ENCODE measurements at regions of chr16 and their contacts with region 1.

Region 1: GRCh38 chr16:361872-362701 is 8.3 kb downstream of the MRPL28 start:
- DNase-seq: peak; percentile 89
- CTCF ChIP-seq: peak; percentile 83

Region 2: GRCh38 chr16:117379-118365 is 244.4 kb before region 1 on chr16:
- CTCF ChIA-PET with region 1: interaction called, 15 read pairs
- POLR2A ChIA-PET with region 1: no interaction called
- DNase-seq: peak; percentile 67
- CTCF ChIP-seq: peak; percentile 58

Region 3: DNA sequence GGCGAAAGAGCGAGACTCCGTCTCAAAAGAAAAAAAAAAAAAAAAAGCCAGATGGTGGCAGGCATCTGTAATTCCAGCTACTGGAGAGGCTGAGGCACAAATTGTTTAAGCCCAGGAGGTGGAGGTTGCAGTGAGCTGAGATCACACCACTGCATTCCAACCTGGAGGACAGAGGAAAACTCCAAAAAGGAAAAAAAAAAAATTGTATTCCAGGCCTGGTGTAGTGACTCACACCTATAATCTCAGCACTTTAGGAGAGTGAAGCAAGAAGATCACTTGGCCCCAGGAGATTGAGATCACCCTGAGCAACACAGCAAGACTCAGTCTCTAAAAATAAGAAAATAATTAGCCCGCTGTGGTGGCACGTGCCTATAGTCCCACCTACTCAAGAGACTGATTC is 161.7 kb before region 1 on chr16:
- CTCF ChIA-PET with region 1: no interaction called
- POLR2A ChIA-PET with region 1: no interaction called
- DNase-seq: no peak
- CTCF ChIP-seq: no peak